ENCODE measurements at regions of chr6 and their contacts with region 1.

Region 1: DNA sequence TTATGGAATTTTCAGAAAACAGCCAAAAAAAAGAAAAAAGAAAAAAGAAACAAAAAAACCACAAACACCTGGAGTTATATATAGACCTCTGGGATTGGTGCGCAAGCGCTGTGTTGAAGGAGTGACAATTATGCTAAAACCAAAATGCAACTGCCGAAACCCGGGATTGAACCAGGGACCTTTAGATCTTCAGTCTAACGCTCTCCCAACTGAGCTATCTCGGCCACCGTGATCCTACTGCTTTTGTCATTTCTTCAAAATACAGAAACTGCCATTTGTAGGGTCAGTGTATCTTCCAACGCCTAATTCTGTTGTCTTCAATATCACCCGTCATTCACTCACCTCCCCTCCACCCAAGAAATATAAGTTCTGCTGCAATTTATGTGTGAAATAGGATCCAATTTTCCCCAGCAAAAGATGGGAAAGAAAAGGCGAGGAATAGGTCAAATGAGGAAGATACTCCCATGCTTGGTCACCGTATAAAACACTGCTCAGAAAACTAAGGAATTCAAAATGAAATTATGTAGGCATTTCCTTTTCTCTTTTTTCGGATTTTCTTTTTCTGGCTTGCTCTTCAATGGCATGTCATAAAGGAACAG is 116.0 kb downstream of the TRIM27 start:
- DNase-seq: no peak
- ATAC-seq: no peak
- H3K4me3 ChIP-seq: no peak overlapping the region
- H3K4me3 Mint-ChIP-seq: peak overlapping the region; percentile 27
- H3K27ac ChIP-seq: no peak overlapping the region
- H3K27ac Mint-ChIP-seq: no peak overlapping the region
- H3K4me1 ChIP-seq: no peaks in the 10 kb centered on the region
- H3K4me1 Mint-ChIP-seq: no peaks in the 10 kb centered on the region
- H3K27me3 ChIP-seq: peaks cover 75 to 91% of the 10 kb centered on the region in 2 experiments
- H3K27me3 Mint-ChIP-seq: peaks cover 90% of the 10 kb centered on the region
- CTCF ChIP-seq: no peak

Region 2: DNA sequence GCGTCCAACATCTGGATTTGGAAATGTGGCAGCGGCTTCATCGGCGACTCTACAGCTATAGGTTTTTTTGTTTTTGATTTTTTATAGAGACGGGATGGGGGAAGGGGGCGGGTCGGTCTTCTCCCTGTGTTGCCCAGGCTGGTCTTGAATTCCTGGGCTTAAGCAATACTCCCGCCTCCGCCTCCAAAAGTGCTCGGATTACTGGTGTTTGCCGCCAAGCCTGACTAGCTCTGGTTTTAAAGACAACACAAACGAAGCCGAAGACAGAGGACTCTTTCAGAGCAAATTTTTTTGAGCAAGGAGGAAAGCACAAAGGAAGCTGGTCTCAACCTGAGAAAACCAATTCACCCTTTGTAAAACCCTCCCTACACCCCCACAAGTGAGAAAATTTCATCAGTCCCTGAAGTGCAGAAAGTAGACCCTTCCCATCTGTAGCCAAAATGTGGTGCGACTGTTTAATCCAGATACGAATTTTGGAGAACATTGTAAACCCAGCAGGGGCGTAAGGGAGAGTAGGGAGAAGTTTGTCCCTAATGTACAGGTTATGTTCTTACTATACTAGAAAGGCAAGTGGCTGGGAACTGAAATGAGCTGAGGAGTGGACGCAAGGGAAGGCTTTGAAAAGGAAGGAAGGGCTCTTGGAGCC is 69.9 kb before region 1 on chr6:
- CTCF ChIA-PET with region 1: no interaction called
- POLR2A ChIA-PET with region 1: no interaction called
- intact Hi-C with region 1: loop called in 1 of 2 experiments (anchors 5 kb)
- DNase-seq: no peak
- ATAC-seq: no peak
- H3K4me3 ChIP-seq: no peak overlapping the region
- H3K4me3 Mint-ChIP-seq: no peak overlapping the region
- H3K27ac ChIP-seq: no peak overlapping the region
- H3K27ac Mint-ChIP-seq: no peak overlapping the region
- H3K4me1 ChIP-seq: no peaks in the 10 kb centered on the region
- H3K4me1 Mint-ChIP-seq: no peaks in the 10 kb centered on the region
- H3K27me3 ChIP-seq: peaks cover 88 to 89% of the 10 kb centered on the region in 2 experiments
- H3K27me3 Mint-ChIP-seq: peaks cover 79% of the 10 kb centered on the region
- CTCF ChIP-seq: no peak

Region 3: DNA sequence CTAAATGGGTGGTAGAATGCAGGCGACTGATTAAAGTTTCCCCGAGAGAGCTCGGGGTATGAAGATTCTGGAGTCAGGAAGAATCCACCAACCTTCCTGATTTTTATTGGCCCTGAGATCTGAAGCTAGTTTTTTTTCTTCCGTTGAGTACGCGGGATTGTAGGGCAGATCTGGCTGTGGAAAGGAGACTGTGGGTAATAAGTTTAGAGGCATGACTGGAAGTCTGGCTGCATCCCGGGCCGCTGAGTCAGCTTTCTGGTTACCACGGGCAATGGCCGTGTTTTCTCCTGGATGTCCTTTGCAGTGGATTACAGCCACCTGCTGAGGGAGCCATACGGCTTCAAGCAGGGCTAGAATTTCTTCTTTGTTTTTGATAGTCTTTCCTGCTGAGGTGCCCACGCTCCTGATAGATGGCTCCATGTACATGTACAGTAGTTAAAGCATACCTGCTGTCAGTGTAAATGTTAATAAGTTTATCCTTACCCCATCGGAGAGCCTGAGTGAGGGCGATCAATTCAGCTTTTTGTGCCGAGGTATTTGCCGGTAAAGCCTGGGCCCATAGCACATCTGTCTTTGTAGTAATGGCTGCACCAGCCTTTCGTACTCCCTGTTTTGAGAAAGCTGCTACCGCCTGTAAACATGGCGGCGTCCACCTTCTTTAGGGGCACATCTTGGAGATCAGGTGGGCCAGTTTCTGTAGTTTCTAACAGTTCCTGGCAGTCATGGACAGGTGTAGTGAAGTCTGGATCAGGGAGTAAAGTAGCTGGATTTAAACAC is 38.0 kb before region 1 on chr6:
- CTCF ChIA-PET with region 1: no interaction called
- POLR2A ChIA-PET with region 1: no interaction called
- intact Hi-C with region 1: loop called in 1 of 2 experiments (anchors 5 kb)
- DNase-seq: no peak
- ATAC-seq: no peak
- H3K4me3 ChIP-seq: no peak overlapping the region
- H3K4me3 Mint-ChIP-seq: no peak overlapping the region
- H3K27ac ChIP-seq: no peak overlapping the region
- H3K27ac Mint-ChIP-seq: no peak overlapping the region
- H3K4me1 ChIP-seq: peaks cover 6% of the 10 kb centered on the region
- H3K4me1 Mint-ChIP-seq: peaks cover 7% of the 10 kb centered on the region
- H3K27me3 ChIP-seq: peaks cover 97 to 99% of the 10 kb centered on the region in 2 experiments
- H3K27me3 Mint-ChIP-seq: peaks cover 99% of the 10 kb centered on the region
- CTCF ChIP-seq: no peak